AG04449 (cell line): ENCODE measurements at regions of chr11 and their contacts with region 1.

Region 1: GRCh38 chr11:8192016-8192895 is 23.4 kb upstream of the RIC3 start:
- DNase-seq: peak; percentile 12
- H3K4me3 ChIP-seq: no peak overlapping the region
- CTCF ChIP-seq: peak; percentile 84

Region 2: DNA sequence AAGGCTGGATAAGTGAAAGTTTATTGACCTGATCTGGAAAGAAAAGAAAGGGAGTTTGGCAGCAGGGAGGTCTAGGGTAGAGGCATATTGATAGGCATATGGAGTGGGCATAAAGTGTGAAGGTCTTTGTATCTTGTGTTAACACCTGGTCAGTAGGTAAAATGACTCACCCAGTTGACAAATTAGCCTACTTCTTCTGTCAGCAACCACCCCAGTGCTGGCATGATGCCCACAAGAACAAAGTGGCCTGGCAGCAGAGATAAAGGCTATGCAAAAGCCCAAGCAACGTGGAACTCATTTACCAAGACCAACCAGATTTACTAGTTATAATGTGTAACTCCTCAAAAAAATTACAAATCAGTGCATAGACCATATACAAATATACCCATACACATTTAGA is 255.6 kb before region 1 on chr11:
- CTCF ChIA-PET with region 1: no interaction called
- POLR2A ChIA-PET with region 1: no interaction called
- DNase-seq: no peak
- H3K4me3 ChIP-seq: no peak overlapping the region
- CTCF ChIP-seq: no peak

Region 3: GRCh38 chr11:8180469-8180868 is 11.8 kb before region 1 on chr11:
- CTCF ChIA-PET with region 1: interaction called, 26 read pairs
- POLR2A ChIA-PET with region 1: no interaction called
- DNase-seq: no peak
- H3K4me3 ChIP-seq: no peak overlapping the region
- CTCF ChIP-seq: no peak

Region 4: GRCh38 chr11:8206251-8207079 is 14.2 kb after region 1 on chr11:
- CTCF ChIA-PET with region 1: interaction called, 10 read pairs
- POLR2A ChIA-PET with region 1: no interaction called
- DNase-seq: no peak
- H3K4me3 ChIP-seq: no peak overlapping the region
- CTCF ChIP-seq: no peak